ENCODE measurements at regions of chr18 and their contacts with region 1.

Region 1: DNA sequence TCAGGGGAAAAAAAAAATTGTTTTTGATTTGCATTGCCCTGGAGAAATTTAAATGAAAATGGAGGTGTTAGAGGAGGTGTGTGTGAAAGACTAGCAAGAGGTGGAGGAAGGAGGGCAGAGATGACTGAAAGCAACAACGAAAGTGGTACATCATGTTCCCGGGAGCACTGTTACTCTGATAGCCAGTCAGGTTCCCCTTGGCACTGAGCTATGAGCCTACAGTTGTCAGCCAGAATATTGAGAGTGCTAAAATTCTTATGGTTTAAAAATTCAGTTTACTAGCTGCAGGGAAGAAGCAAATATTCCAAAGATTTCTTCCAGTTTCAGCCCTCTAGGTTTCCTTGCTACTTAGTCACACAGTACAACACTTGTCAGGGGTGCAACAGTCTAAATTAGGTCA is 366.7 kb upstream of the DLGAP1 start:
- DNase-seq: no peak
- H3K4me3 Mint-ChIP-seq: no peak overlapping the region
- H3K27ac Mint-ChIP-seq: no peak overlapping the region
- H3K4me1 Mint-ChIP-seq: no peaks in the 10 kb centered on the region
- H3K27me3 Mint-ChIP-seq: no peaks in the 10 kb centered on the region

Region 2: GRCh38 chr18:4831791-4832375 is 10.1 kb after region 1 on chr18:
- CTCF ChIA-PET with region 1: no interaction called
- intact Hi-C with region 1: no loop called
- DNase-seq: no peak
- H3K4me3 Mint-ChIP-seq: no peak overlapping the region
- H3K27ac Mint-ChIP-seq: no peak overlapping the region
- H3K4me1 Mint-ChIP-seq: no peaks in the 10 kb centered on the region
- H3K27me3 Mint-ChIP-seq: no peaks in the 10 kb centered on the region

Region 3: GRCh38 chr18:4921548-4921947 is 99.7 kb after region 1 on chr18:
- CTCF ChIA-PET with region 1: no interaction called
- intact Hi-C with region 1: loop called (anchors 10 kb)
- DNase-seq: no peak
- H3K4me3 Mint-ChIP-seq: no peak overlapping the region
- H3K27ac Mint-ChIP-seq: no peak overlapping the region
- H3K4me1 Mint-ChIP-seq: no peaks in the 10 kb centered on the region
- H3K27me3 Mint-ChIP-seq: peaks cover 2% of the 10 kb centered on the region

Region 4: GRCh38 chr18:5052491-5052890 is 230.7 kb after region 1 on chr18:
- CTCF ChIA-PET with region 1: no interaction called
- intact Hi-C with region 1: no loop called
- DNase-seq: no peak
- H3K4me3 Mint-ChIP-seq: no peak overlapping the region
- H3K27ac Mint-ChIP-seq: no peak overlapping the region
- H3K4me1 Mint-ChIP-seq: peaks cover 2% of the 10 kb centered on the region
- H3K27me3 Mint-ChIP-seq: peaks cover 3% of the 10 kb centered on the region

Measured in activated naive CD4-positive, alpha-beta T cell treated with anti-CD3 and anti-CD28 coated beads for 36 hours (primary cell).